CD14-positive monocyte (primary cell): ENCODE measurements at regions of chr12 and their contacts with region 1.

Region 1: DNA sequence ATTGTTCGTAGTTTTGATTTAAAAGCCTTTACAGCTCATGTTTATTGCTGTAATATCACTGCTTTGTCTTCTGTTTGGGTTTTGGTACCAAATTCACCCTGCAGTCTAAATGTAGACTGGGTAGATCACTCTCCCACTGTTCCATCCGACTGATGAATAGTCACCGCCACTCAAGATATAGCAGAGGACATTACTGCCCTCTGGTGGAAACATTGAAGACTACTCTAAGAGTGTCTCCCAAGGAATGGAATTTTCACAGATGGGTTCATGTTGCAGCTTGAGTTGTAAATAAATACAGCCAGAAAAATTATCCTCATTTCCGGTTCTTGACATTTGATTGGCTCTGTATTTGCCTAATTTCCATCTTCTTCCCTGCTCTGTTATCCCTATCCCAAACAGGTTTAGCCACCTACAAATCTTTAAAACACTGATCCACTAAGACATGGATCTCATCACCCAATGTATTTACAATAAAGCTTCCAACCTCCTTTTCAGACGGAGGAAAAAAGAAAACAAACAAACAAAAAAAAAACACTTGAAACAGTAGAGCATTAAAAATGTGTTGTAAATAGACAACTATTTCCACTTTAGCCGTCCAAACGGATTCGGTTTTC is 198.3 kb upstream of the CPNE8 start:
- DNase-seq: peak; percentile 42 to 68 (median 59)
- H3K4me3 ChIP-seq: no peak overlapping the region
- H3K4me3 Mint-ChIP-seq: no peak overlapping the region
- H3K27ac ChIP-seq: no peak overlapping the region
- H3K27ac Mint-ChIP-seq: no peak overlapping the region
- H3K4me1 ChIP-seq: no peaks in the 10 kb centered on the region
- H3K4me1 Mint-ChIP-seq: peaks cover 2% of the 10 kb centered on the region
- H3K27me3 ChIP-seq: no peaks in the 10 kb centered on the region
- H3K27me3 Mint-ChIP-seq: peaks cover 0 to 7% (median 5%) of the 10 kb centered on the region in 3 donors
- CTCF ChIP-seq: peak; percentile 88

Region 2: DNA sequence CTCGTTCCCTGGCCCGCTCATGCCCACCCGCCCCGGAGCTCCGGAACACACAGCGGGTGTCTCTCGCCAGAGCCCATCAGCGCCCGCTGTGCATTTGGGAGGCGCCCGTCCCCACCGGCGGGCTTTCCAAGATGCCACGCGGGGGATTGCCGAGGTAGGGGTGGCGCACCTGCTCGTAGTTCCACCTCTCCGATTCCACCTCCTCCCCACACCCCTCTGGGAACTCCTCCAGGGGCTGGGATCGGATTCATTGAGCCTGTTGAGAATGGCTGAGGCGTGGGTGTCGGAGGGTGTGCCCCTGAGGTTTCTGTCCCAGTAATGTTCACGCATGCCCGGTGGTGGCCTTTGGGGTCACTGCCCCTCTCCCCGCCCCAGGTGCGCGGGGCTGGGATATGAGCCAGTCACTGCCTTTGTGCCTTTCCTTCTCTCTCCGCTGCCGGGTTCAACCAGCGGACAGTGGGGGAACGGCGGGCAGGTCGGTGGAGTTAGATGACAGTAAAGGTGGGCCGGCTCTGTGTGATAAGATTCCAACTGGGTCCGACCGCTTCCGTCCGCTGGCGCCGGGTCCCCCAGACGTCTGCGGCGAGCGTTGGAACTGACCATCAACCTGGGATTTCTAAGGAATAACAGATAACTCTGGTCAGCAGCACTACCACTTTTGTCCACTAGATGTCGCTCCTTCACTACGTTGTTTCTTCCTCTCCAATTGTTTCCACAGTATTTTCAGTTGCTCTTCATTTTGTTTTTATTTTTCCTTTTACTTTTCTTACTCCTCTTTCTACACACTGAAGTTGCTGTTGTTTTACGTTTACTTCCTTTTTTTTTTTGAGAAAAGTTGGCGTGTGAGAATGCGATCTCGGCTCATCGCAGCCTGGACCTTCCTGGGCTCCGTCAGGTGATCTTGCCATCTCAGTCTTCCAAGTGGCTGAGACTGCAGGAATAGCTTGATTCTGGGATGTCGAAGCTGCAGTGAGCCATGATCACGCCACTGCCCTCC is 965.1 kb before region 1 on chr12:
- intact Hi-C with region 1: loop called in 1 of 2 experiments (anchors 10 kb)
- DNase-seq: peak; percentile 29 to 74 (median 49)
- H3K4me3 ChIP-seq: no peak overlapping the region
- H3K4me3 Mint-ChIP-seq: peak overlapping the region; percentile 58 to 91
- H3K27ac ChIP-seq: no peak overlapping the region
- H3K27ac Mint-ChIP-seq: peak overlapping the region in 2 of 7 donors; percentile 43 to 46
- H3K4me1 ChIP-seq: peaks cover 4 to 6% of the 10 kb centered on the region in 2 donors
- H3K4me1 Mint-ChIP-seq: peaks cover 8% of the 10 kb centered on the region
- H3K27me3 ChIP-seq: peaks cover 0 to 11% of the 10 kb centered on the region in 2 donors
- H3K27me3 Mint-ChIP-seq: peaks cover 13 to 18% (median 18%) of the 10 kb centered on the region in 3 donors
- CTCF ChIP-seq: peak; percentile 94

Region 3: GRCh38 chr12:38324896-38325295 is 778.8 kb before region 1 on chr12:
- intact Hi-C with region 1: loop called (anchors 5 to 10 kb)
- DNase-seq: no peak
- H3K4me3 ChIP-seq: no peak overlapping the region
- H3K4me3 Mint-ChIP-seq: no peak overlapping the region
- H3K27ac ChIP-seq: no peak overlapping the region
- H3K27ac Mint-ChIP-seq: no peak overlapping the region
- H3K4me1 ChIP-seq: peaks cover 0 to 4% of the 10 kb centered on the region in 2 donors
- H3K4me1 Mint-ChIP-seq: peaks cover 3% of the 10 kb centered on the region
- H3K27me3 ChIP-seq: no peaks in the 10 kb centered on the region
- H3K27me3 Mint-ChIP-seq: no peaks in the 10 kb centered on the region
- CTCF ChIP-seq: no peak

Region 4: DNA sequence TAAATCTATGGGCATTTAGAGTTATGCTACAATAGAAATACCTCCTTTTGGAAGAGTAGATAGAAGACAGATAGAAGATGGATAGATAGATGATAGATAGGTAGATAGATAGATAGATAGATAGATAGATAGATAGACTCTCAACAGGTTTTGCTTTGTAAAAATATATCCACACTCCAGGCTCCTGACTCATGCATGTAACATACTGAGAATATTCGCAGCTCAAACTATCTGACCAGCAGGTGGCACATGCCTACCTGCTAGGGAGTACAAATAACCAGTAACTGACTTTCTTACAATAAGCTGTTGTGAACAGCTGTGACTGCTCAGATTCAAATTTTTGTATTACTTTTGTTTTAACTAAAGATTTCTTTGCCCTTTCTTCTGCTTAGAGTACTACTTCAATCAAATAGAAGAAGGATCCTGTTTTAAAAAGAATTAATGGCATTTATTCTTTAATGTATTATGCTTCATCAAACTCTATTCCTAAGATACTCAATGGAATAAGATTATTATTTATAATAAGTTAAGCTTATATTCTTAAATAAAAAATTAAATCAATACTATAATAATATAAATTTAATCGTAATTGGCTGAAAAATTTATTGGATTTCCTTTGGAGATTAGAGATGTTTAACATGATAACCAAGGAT is 182.5 kb before region 1 on chr12:
- intact Hi-C with region 1: loop called (anchors 5 to 10 kb)
- DNase-seq: peak; percentile 41 to 60 (median 60)
- H3K4me3 ChIP-seq: no peak overlapping the region
- H3K4me3 Mint-ChIP-seq: no peak overlapping the region
- H3K27ac ChIP-seq: no peak overlapping the region
- H3K27ac Mint-ChIP-seq: no peak overlapping the region
- H3K4me1 ChIP-seq: no peaks in the 10 kb centered on the region
- H3K4me1 Mint-ChIP-seq: no peaks in the 10 kb centered on the region
- H3K27me3 ChIP-seq: no peaks in the 10 kb centered on the region
- H3K27me3 Mint-ChIP-seq: peaks cover 0 to 1% (median 0%) of the 10 kb centered on the region in 3 donors
- CTCF ChIP-seq: peak; percentile 69